ENCODE measurements at regions of chr11 and their contacts with region 1.

Region 1: DNA sequence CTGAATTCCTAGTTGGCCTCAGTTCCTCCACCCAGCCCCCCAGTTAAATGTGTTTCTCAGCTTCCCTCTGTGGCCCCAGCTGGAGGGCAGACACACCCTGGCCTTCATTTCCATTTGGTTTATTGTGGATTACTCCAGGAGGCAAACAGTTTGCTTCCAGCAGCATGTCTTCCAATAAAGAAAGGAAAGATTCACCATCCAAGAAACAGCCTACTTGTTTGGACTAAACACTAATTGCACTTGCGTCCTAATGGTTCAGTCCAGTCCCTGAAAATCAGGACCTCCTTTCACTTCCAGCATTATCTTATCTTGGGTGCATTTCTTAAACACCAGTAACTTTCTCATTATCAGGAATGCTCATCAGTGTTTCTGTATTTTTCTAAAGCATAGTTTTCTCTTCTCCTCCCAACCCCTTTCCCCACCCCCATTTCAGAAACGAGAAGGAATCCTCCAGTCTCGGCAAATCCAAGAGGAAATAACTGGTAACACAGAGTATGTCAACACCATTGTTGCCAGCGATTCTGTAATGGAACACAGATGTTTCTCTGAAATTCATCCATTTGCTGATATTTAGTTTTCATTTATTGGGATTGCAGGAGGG is 130.9 kb downstream of the PARVA start:
- DNase-seq: peak; percentile 75
- ATAC-seq: peak; percentile 80
- H3K4me3 ChIP-seq: no peak overlapping the region
- H3K27ac ChIP-seq: peak overlapping the region; percentile 88; the same call in 1 of the 2 replicates
- H3K4me1 ChIP-seq: peaks cover 17% of the 10 kb centered on the region
- H3K27me3 ChIP-seq: no peaks in the 10 kb centered on the region
- CTCF ChIP-seq: no peak
- POLR2A ChIP-seq: no peak
- RAD21 ChIP-seq: no peak

Region 2: DNA sequence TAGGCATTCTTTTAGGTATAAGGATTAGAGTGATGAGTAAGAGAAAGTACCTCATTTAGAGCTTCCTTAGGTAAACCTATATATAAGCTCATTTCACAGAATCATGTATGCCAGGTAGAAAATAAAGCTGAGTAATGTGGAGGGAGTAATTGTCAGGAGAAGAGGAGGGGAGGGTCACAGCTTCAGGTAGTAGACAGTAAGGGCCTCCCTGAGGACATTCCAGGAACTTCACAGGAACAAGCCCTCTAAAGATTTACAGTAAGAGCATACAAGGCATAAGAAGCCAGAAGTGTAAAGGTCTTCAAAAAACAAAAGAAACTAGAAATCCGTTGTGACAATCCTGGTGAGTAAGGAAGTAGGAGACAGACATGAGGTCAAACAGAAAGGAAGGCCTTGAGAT is 608.9 kb before region 1 on chr11:
- CTCF ChIA-PET with region 1: no interaction called
- POLR2A ChIA-PET with region 1: no interaction called
- dilution Hi-C with region 1: no loop called
- in situ Hi-C with region 1: no loop called
- intact Hi-C with region 1: no loop called
- DNase-seq: no peak
- ATAC-seq: no peak
- H3K4me3 ChIP-seq: no peak overlapping the region
- H3K27ac ChIP-seq: no peak overlapping the region
- H3K4me1 ChIP-seq: no peaks in the 10 kb centered on the region
- H3K27me3 ChIP-seq: no peaks in the 10 kb centered on the region
- CTCF ChIP-seq: no peak
- POLR2A ChIP-seq: no peak
- RAD21 ChIP-seq: no peak

Region 3: GRCh38 chr11:12853652-12854296 is 345.5 kb after region 1 on chr11:
- CTCF ChIA-PET with region 1: no interaction called
- POLR2A ChIA-PET with region 1: no interaction called
- dilution Hi-C with region 1: no loop called
- in situ Hi-C with region 1: no loop called
- intact Hi-C with region 1: no loop called
- DNase-seq: peak; percentile 64
- ATAC-seq: peak; percentile 30; the same call in 1 of the 2 replicates
- H3K4me3 ChIP-seq: no peak overlapping the region
- H3K27ac ChIP-seq: no peak overlapping the region
- H3K4me1 ChIP-seq: peaks cover 8% of the 10 kb centered on the region
- H3K27me3 ChIP-seq: no peaks in the 10 kb centered on the region
- CTCF ChIP-seq: no peak
- POLR2A ChIP-seq: no peak
- RAD21 ChIP-seq: no peak

Region 4: DNA sequence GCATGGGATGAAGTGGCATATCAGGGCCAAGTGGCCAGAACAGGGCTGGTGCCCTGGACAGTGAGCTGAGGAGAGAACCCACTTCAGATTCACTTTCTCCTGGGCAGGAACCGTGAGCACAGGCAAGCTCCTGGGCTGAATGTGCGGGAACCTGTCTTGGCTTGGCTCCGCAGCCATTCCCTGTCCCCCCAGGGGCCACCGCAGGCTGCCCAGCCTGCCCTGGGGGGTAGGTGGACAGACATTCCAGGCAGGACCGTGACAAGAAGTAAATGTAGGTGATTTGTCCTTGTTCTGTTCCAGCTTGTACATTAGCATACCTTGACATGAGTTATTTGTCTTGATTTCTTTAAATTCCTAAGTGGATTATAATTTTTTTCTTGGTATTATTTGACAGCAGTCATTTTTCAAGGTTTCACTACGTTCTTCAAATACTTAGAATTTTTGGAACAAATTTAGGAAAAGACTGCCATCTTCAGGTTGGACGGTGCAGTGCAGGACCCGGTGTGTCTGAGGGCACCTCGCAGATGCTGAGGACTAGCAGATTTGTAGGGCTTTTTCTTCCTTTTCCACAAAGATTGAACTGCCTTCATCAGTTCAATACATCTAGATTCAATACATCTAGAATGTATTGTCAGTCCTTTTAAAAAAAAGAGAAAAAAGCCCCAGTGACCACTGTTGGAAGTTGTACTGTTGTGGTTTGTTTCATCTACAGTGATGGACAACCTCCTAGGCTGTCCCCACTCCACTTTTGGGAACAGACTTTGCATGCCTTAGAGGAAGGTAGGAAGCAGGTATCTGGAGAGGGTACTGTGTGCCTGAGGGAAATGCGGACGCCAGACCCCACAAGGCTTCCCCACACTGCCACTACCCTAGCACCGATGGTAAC is 385.8 kb after region 1 on chr11:
- CTCF ChIA-PET with region 1: no interaction called
- POLR2A ChIA-PET with region 1: no interaction called
- dilution Hi-C with region 1: no loop called
- in situ Hi-C with region 1: no loop called
- intact Hi-C with region 1: loop called (anchors 5 kb)
- DNase-seq: peak; percentile 52
- ATAC-seq: peak; percentile 68
- H3K4me3 ChIP-seq: no peak overlapping the region
- H3K27ac ChIP-seq: peak overlapping the region; percentile 56
- H3K4me1 ChIP-seq: peaks cover 25% of the 10 kb centered on the region
- H3K27me3 ChIP-seq: no peaks in the 10 kb centered on the region
- CTCF ChIP-seq: peak; percentile 83
- POLR2A ChIP-seq: no peak
- RAD21 ChIP-seq: peak; percentile 69